ENCODE measurements at regions of chr3 and their contacts with region 1.

Region 1: GRCh38 chr3:180947761-180948633 is 35.5 kb downstream of the FXR1 start:
- DNase-seq: no peak
- H3K4me3 Mint-ChIP-seq: no peak overlapping the region
- H3K27ac Mint-ChIP-seq: no peak overlapping the region
- H3K4me1 Mint-ChIP-seq: peaks cover 25% of the 10 kb centered on the region
- H3K27me3 Mint-ChIP-seq: no peaks in the 10 kb centered on the region

Region 2: DNA sequence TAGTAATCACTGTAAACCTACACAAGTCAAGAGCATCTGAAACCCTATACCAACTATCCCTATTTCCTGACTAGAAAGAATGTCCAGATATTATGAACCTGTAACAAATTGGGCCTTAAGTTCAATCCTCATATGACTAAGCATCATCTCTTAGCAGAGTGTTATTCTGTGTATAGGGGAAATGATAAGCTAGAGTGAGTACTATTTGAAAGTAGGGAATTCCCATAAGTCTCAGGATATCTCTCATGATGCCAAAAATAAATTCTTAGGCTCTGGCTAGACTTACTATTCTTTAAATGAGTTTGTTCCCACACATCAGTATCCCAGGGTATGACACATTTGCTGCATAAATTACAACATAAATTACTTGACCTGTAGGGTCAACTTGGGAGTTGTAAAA is 1358.9 kb before region 1 on chr3:
- intact Hi-C with region 1: loop called (anchors 10 kb)
- DNase-seq: no peak
- H3K4me3 Mint-ChIP-seq: no peak overlapping the region
- H3K27ac Mint-ChIP-seq: peak overlapping the region; percentile 45
- H3K4me1 Mint-ChIP-seq: peaks cover 8% of the 10 kb centered on the region
- H3K27me3 Mint-ChIP-seq: no peaks in the 10 kb centered on the region

Region 3: GRCh38 chr3:180923561-180923960 is 24.4 kb before region 1 on chr3:
- intact Hi-C with region 1: no loop called
- DNase-seq: no peak
- H3K4me3 Mint-ChIP-seq: no peak overlapping the region
- H3K27ac Mint-ChIP-seq: no peak overlapping the region
- H3K4me1 Mint-ChIP-seq: peaks cover 30% of the 10 kb centered on the region
- H3K27me3 Mint-ChIP-seq: no peaks in the 10 kb centered on the region

Measured in activated T-helper 1 cell treated with anti-CD3 and anti-CD28 coated beads, Interleukin-12 subunit alpha, Interleukin-12 subunit beta, Interleukin-2, Interleukin-4 antibody, amounts not matched to agents 30 ng/mL and 10 ng/mL and 1 ng/mL, durations not matched to agents 14 hours and 24 hours and 36 hours (primary cell).